ENCODE measurements at regions of chr4 and their contacts with region 1.

Region 1: DNA sequence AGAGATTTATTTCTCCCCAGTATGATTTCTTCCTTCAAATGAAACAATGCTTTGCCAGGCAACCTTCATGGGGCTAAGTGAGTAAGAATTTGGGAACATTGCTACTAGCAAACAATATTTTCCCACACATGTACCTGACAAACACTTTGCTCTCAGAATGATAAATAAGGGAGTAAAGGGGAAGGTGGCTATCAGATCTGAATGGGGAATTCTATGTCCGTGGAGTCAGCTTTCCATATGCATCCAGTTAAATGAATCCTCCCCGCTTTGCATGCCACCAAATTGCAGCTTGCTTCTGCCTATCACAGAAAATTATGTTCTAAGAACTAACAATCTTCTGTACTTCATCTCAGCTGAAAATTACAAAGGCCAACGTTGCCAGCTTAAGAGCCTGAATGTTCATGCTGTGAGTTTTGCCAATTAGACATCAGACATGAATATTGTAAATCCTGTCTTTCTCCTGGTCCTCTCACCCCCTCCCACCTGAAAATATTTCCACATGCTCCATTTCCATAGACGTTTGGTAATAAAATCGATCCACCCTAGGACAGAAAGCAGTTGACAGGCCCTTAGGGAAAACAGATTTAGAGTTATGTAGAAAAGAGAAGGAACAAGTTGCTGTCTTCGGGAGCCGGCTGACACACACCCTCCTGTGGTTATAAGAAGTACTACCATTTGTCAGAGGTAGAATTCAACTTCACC is 6.3 kb downstream of the MEPE start:
- DNase-seq: no peak
- H3K4me3 ChIP-seq: no peak overlapping the region
- H3K27me3 ChIP-seq: no peaks in the 10 kb centered on the region
- CTCF ChIP-seq: peak; percentile 79

Region 2: DNA sequence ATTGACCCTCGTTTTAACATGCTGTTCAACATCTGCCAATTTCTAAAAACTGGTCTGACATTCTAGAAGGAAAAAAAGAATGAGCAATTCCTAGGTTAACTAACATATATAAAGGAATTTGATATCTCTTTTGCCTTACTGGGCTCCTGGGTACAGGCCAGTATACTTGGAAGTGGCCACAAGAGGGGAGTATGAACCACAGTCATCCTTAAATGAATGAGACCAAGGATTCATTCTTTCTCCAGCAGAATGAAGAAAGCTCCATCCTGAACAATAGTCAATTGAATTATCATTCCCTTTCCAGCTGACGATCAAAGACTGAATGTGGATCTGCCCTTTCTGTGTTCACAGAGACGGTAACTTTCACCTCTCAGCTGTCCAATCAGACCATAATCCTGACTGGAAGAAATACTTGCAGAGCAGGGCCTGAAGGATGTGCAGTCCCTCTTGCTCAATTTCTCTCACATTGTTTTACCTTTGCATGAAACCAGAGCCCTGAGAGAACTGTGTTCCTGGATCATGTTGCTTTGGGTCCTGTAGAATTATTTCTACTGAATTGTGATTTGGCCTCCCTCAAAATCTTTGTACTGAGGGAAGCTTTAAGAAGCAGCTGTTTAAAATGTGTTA is 295.1 kb before region 1 on chr4:
- CTCF ChIA-PET with region 1: interaction called, 13 read pairs
- POLR2A ChIA-PET with region 1: no interaction called
- DNase-seq: no peak
- H3K4me3 ChIP-seq: no peak overlapping the region
- H3K27me3 ChIP-seq: no peaks in the 10 kb centered on the region
- CTCF ChIP-seq: peak; percentile 57

Region 3: DNA sequence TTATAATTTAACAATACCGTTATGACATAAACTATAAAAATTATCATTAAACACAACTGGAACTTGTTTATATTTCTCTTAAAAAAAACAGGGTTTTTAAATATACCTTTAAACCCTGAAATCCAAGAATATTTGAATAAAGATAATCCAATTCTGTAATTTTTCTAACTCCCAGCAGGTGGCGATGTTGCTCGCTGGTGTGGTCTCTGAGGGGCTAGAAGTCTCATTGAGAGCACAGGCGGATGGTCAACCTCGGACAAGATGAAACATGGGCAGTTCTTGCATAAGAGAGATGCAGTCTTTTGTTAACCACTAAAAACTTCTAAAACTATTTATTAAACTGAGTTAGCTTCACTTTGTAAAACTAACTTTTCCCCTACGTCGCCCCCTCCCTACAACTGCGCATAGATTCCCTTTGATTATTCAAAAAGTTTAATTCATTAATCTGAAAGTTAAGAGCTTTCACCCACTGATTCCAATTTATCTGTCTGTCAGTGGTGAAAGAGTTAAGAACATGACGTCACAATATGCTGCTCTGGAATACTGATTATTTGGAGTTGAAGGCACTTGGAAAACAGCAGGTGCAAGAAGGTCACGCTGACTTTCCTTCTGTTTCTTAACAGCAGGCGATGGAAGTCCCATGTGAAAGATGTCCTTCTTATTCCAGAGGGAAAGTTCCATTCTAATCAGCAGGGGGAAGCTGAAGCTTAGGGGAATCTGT is 159.4 kb before region 1 on chr4:
- CTCF ChIA-PET with region 1: interaction called, 130 read pairs
- POLR2A ChIA-PET with region 1: no interaction called
- DNase-seq: peak; percentile 3
- H3K4me3 ChIP-seq: no peak overlapping the region
- H3K27me3 ChIP-seq: no peaks in the 10 kb centered on the region
- CTCF ChIP-seq: peak; percentile 74

Region 4: GRCh38 chr4:87824352-87824751 is 14.7 kb before region 1 on chr4:
- CTCF ChIA-PET with region 1: interaction called, 10 read pairs
- POLR2A ChIA-PET with region 1: no interaction called
- DNase-seq: no peak
- H3K4me3 ChIP-seq: no peak overlapping the region
- H3K27me3 ChIP-seq: no peaks in the 10 kb centered on the region
- CTCF ChIP-seq: no peak

Region 5: DNA sequence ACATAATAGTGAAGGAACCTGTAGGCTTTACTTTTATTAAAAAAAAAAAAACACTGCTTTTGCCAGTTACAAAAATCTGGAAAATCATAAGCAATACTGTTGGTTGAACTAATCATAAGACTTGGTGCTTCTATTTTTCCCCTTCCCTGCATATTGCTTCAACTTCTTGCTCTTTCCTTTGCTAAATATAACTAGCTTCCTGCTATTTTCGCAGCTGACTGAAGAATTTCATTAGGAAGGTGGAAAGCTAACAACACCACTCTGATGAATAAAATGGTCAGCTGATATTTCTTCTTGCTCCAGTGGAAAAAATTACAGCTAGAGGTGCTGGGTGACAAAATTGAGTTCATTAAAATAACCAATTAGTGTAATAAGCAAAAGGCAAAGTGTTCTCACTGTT is 33.0 kb after region 1 on chr4:
- CTCF ChIA-PET with region 1: no interaction called
- POLR2A ChIA-PET with region 1: no interaction called
- DNase-seq: no peak
- H3K4me3 ChIP-seq: no peak overlapping the region
- H3K27me3 ChIP-seq: no peaks in the 10 kb centered on the region
- CTCF ChIP-seq: no peak

Region 6: DNA sequence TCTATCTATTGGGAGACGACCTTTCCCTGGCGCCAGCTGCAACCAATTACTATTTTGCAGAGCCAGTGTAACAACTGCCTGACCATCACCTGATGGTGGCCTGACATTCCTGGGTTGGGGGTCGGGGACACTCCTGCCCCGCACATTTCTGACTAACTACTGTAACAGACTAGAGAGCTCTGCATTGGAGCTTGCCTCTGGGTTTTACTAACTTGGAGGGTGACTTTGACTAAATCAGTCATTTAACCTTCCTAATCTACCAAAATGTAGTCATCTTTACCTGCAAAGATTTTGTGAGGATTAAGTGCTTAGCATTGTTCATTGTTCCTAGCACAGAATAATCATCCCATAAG is 356.9 kb after region 1 on chr4:
- CTCF ChIA-PET with region 1: no interaction called
- POLR2A ChIA-PET with region 1: no interaction called
- DNase-seq: no peak
- H3K4me3 ChIP-seq: no peak overlapping the region
- H3K27me3 ChIP-seq: no peaks in the 10 kb centered on the region
- CTCF ChIP-seq: no peak